A549 (cell line): ENCODE measurements at regions of chr17 and their contacts with region 1.

Region 1: DNA sequence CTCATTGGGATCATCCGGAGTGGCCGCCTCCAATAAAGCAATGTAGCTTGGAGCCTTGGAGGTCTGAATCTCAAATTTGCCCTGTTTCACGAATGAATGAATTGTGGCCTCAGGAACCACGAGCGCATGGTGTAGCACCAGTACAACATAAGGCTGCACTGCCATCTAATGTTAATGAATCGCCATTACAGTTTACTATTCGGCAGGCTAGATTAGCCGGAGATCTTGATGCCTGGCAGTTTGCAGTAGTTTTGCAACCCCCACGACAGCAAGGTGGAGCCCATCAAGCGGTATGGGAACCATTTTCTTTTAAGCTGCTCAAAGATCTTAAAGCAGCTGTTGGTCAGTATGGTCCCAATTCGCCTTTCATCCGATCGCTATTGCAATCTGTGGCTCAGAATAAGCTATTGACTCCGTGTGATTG is 18.8 kb downstream of the ALOX15B start:
- DNase-seq: peak; percentile 88 to 97
- ATAC-seq: peak; percentile 67 to 93
- H3K4me3 ChIP-seq: peak overlapping the region; percentile 16; the same call in 2 of the 3 replicates
- H3K27ac ChIP-seq: no peak overlapping the region; a peak in 1 of 6 replicates
- H3K4me1 ChIP-seq: peaks cover 6% of the 10 kb centered on the region; the same call in 2 of the 3 replicates
- CTCF ChIP-seq: peak; percentile 93
- EP300 ChIP-seq: no peak
- POLR2A ChIP-seq: no peak
- RAD21 ChIP-seq: peak; percentile 90 to 94

Region 2: DNA sequence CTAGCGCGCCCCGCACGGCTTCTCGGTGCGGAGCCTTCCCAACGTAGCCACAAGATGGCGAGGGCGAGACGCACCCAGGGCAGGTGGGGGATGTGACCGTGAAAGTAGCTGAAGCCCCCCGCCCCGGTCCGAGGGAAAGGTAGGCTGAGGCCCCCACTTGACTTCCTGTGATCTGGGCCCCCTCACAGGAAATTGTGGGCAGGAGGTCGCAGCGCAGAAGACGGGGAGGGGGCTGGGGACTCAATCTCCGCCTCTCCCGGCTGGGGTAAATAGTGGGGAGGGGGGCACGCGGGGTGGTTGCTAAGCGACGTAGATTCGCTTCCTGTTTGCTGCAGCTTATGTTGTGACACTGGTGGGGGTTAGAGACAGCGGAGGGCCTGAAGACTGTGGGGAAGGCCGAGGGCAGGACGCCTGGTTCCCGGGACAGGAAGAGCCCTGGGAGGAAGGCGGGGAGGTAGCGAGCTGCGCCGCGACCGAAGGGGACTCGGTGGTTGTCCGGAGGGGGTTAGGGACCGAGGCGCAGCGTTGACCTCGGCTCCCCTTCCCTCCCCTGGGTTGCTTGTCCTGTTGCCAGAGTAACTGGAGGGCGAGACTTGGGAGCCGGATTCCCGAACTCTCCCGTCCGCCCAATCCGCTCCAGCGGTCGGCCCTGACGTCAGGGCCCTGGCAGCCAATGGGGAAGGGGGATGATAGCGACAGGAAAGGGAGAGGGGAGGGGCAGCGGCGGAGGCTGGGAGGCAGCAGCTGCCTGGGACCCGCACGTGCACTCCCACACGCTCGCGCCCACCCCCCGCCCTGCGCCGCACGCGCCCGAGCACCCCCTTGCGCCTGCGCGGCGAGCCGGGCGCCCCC is 222.5 kb before region 1 on chr17:
- CTCF ChIA-PET with region 1: interaction called, 10 read pairs
- POLR2A ChIA-PET with region 1: no interaction called
- DNase-seq: peak; percentile 99
- ATAC-seq: peak; percentile 58 to 73
- H3K4me3 ChIP-seq: peak overlapping the region; percentile 60
- H3K27ac ChIP-seq: peak overlapping the region; percentile 82 to 89
- H3K4me1 ChIP-seq: peaks cover 36% of the 10 kb centered on the region
- CTCF ChIP-seq: peak; percentile 87
- EP300 ChIP-seq: no peak
- POLR2A ChIP-seq: peak; percentile 39
- RAD21 ChIP-seq: peak; percentile 83 to 88

Region 3: GRCh38 chr17:7903154-7904103 is 154.3 kb before region 1 on chr17:
- CTCF ChIA-PET with region 1: interaction called, 26 read pairs
- POLR2A ChIA-PET with region 1: no interaction called
- DNase-seq: no peak
- ATAC-seq: no peak
- H3K4me3 ChIP-seq: no peak overlapping the region
- H3K27ac ChIP-seq: no peak overlapping the region
- H3K4me1 ChIP-seq: no peaks in the 10 kb centered on the region
- CTCF ChIP-seq: no peak
- EP300 ChIP-seq: no peak
- POLR2A ChIP-seq: no peak
- RAD21 ChIP-seq: no peak

Region 4: DNA sequence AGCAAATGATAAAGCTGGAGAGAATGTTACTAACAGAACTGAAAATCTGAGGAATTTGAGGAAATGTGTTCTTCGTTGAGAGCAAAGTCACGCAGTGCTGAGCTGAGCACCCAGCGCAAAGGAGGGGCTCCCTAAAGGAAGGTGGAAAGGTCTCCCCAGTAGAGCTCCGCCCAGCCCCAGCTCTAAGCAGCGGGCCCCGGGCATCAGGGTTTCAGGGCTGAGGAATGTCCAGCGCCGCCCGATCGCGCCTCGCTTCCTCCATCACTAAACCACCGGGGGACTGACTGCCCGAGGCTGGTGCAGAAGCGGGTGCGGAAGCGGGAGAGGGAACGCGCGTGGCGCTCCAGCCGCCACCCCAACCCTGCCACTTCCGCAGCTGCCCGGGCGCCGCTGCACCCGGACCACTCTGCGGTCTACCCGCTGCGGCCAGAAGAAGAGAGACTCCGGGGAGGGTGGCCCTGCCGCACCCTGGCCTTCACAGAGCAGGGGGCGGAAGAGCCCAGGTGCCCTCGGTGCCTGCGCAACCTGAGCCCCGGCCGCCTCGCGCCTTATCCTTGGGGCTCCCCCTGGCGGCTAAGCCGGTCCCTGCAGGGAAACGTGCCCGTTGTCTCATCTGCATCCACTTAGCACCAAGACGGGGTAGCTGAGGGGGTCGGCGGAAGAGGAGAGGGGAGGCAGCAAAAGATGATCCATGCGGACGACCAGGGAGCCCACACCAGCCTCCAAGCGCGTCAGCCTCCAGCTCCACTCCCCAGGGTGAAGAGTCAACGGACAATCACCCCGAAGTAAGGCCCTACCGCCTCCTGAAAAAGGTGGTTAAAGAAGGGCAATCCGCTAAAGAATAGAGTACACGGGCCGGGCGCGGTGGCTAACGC is 67.7 kb before region 1 on chr17:
- CTCF ChIA-PET with region 1: interaction called, 39 read pairs
- POLR2A ChIA-PET with region 1: no interaction called
- DNase-seq: peak; percentile 88 to 97
- ATAC-seq: peak; percentile 90 to 93
- H3K4me3 ChIP-seq: peak overlapping the region; percentile 58
- H3K27ac ChIP-seq: peak overlapping the region; percentile 83 to 93
- H3K4me1 ChIP-seq: no peaks in the 10 kb centered on the region
- CTCF ChIP-seq: peak; percentile 97
- EP300 ChIP-seq: no peak
- POLR2A ChIP-seq: peak; percentile 76
- RAD21 ChIP-seq: peak; percentile 70 to 76

Region 5: GRCh38 chr17:8041249-8041928 is 16.3 kb before region 1 on chr17:
- CTCF ChIA-PET with region 1: interaction called, 229 read pairs
- POLR2A ChIA-PET with region 1: interaction called, 3 read pairs
- DNase-seq: peak; percentile 81
- ATAC-seq: peak; percentile 67 to 76; a peak in 5 of 6 replicates
- H3K4me3 ChIP-seq: no peak overlapping the region
- H3K27ac ChIP-seq: peak overlapping the region in 1 of 2 experiments; percentile 3; a peak in 1 of 6 replicates
- H3K4me1 ChIP-seq: no peaks in the 10 kb centered on the region
- CTCF ChIP-seq: peak; percentile 96
- EP300 ChIP-seq: no peak
- POLR2A ChIP-seq: no peak
- RAD21 ChIP-seq: peak; percentile 94 to 96

Region 6: GRCh38 chr17:8138672-8139371 is 81.1 kb after region 1 on chr17:
- CTCF ChIA-PET with region 1: interaction called, 13 read pairs
- POLR2A ChIA-PET with region 1: no interaction called
- DNase-seq: peak; percentile 93 to 99
- ATAC-seq: peak; percentile 86 to 94
- H3K4me3 ChIP-seq: peak overlapping the region; percentile 58
- H3K27ac ChIP-seq: peak overlapping the region; percentile 82 to 86
- H3K4me1 ChIP-seq: peaks cover 22% of the 10 kb centered on the region
- CTCF ChIP-seq: peak; percentile 98
- EP300 ChIP-seq: peak in 1 of 2 experiments; percentile 27; a peak in 1 of 5 replicates
- POLR2A ChIP-seq: peak; percentile 47; the same call in 1 of the 2 replicates
- RAD21 ChIP-seq: peak; percentile 90 to 93